ENCODE measurements at regions of chr1 and their contacts with region 1.

Region 1: DNA sequence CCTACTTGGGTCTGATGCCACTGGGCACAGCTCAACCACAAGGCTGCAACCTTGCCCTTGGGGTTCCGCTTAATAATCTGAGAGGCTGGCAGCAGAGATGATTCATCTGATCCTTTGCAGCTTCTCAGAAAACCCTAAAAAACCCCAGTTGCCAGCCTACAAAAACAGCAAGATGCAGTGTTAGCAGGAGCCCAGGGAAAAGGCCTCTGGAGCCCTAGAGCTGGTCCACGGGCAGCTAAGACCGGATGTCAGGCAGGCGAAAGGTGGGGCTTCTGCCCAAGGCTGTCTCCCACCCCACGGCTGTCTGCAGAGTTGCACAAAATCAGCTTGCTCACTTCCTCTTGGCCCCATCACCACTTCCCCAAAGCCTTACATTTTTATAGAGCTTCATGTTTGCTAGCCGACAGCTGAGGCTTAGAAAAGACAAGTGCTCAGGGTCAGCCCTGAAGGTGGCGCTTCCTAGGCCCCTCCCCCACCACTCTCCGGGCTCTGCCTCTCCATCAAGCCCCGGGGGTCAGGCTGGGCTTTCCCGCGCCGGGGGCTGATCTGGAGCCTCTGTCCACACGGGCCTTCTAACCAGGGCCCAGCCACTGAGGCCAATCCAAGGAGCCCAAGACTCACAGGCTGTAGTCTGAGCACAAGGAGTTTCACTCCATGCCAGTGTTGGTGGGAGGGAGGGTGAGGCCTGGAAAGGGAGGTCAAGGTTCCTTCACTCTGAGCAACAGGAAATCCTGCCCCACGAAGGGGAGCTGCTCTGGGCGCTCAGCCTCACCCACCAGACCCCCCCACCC is 4.2 kb upstream of the ADORA3 start:
- DNase-seq: peak; percentile 71
- ATAC-seq: peak; percentile 76
- H3K4me3 Mint-ChIP-seq: peak overlapping the region; percentile 79
- H3K27ac Mint-ChIP-seq: peak overlapping the region; percentile 90
- H3K4me1 Mint-ChIP-seq: peaks cover 47% of the 10 kb centered on the region
- H3K27me3 Mint-ChIP-seq: no peaks in the 10 kb centered on the region

Region 2: DNA sequence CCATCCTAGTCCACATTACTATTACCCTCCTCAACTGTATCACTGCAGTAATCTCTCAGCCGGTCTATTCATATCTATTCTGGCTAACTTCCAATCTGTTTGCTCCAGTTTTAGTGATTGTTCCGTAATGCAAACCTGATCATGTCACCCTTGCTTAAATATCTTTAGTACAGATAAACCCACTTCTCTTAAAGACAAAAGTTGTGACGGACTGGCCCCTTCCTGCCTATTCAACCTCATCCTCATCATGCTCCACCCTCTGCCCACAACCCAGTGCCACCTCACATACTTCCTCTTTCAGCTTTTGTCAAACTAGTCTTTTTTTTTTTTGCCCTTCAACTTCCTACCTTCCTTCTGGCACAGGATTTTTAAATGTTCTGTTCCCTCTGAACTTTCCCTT is 36.6 kb before region 1 on chr1:
- POLR2A ChIA-PET with region 1: interaction called, 29 read pairs
- DNase-seq: peak; percentile 53
- ATAC-seq: peak; percentile 88
- H3K4me3 Mint-ChIP-seq: no peak overlapping the region
- H3K27ac Mint-ChIP-seq: no peak overlapping the region
- H3K4me1 Mint-ChIP-seq: peaks cover 25% of the 10 kb centered on the region
- H3K27me3 Mint-ChIP-seq: no peaks in the 10 kb centered on the region

Region 3: DNA sequence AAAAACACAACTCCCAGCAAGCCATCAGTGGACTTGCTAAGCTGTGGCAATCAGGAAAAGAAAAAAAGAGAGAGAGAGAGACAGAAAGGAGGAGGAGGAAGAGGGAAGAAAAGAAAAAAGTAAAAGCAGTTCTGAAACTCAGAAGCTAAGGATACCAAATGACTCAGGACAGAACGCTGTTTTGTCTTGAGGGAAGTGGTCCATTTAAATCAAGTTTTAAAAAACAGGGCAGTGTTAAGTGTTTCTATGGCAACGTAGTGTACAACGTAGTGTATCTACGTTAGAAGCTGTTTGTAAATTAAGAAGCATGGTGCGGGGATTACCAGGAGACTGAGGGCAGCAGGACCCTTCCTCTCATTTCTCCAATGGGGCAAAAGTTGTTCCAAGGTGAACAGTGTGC is 10.0 kb before region 1 on chr1:
- POLR2A ChIA-PET with region 1: interaction called, 12 read pairs
- DNase-seq: no peak
- ATAC-seq: no peak
- H3K4me3 Mint-ChIP-seq: no peak overlapping the region
- H3K27ac Mint-ChIP-seq: no peak overlapping the region
- H3K4me1 Mint-ChIP-seq: peaks cover 21% of the 10 kb centered on the region
- H3K27me3 Mint-ChIP-seq: peaks cover 2% of the 10 kb centered on the region

Region 4: GRCh38 chr1:111603979-111604378 is 96.4 kb after region 1 on chr1:
- POLR2A ChIA-PET with region 1: interaction called, 16 read pairs
- DNase-seq: peak; percentile 73
- ATAC-seq: peak; percentile 99
- H3K4me3 Mint-ChIP-seq: peak overlapping the region; percentile 65
- H3K27ac Mint-ChIP-seq: peak overlapping the region; percentile 90
- H3K4me1 Mint-ChIP-seq: peaks cover 53% of the 10 kb centered on the region
- H3K27me3 Mint-ChIP-seq: no peaks in the 10 kb centered on the region

Region 5: GRCh38 chr1:111747282-111747734 is 239.7 kb after region 1 on chr1:
- POLR2A ChIA-PET with region 1: interaction called, 14 read pairs
- DNase-seq: no peak
- ATAC-seq: peak; percentile 83
- H3K4me3 Mint-ChIP-seq: no peak overlapping the region
- H3K27ac Mint-ChIP-seq: no peak overlapping the region
- H3K4me1 Mint-ChIP-seq: peaks cover 12% of the 10 kb centered on the region
- H3K27me3 Mint-ChIP-seq: peaks cover 20% of the 10 kb centered on the region